Activated CD4-positive, alpha-beta memory T cell treated with anti-CD3 and anti-CD28 coated beads for 36 hours (primary cell): ENCODE measurements at regions of chr16 and their contacts with region 1.

Region 1: DNA sequence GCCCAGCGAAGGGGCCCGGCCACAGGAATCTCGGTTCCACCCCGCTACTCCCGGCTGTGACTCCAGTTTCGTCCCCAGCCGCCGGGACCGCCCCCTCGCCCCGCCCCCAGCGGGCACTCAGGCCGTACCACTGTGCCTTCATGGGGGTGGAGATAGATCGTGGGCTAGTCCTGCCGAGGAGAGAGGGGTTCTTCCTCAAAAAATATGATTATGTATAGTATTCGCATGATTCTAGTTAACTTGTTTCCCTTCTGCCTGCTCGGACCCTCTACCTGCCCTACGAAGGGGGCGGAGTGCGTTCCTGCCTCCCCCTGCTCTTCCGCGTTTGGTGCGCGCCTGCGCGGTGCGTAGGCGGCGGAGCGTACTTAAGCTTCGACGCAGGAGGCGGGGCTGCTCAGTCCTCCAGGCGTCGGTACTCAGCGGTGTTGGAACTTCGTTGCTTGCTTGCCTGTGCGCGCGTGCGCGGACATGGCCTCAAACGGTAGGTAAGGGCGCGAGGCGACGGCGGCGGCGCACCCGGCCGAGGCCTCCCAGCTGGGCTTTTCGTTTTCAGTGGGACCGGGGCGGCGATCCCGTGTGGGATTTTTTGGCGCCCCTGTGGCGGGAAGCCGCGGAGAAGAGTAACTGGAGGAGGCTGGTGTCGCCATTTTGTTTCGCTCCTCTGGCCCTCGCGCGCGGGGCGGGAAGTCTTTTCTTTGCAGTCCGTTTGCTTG is at the start of gene FUS:
- DNase-seq: peak; percentile 93
- H3K4me3 Mint-ChIP-seq: peak within 1 kb of the TSS; percentile 86
- H3K27ac Mint-ChIP-seq: peak within 1 kb of the TSS; percentile 99
- H3K4me1 Mint-ChIP-seq: peaks cover 44% of the 10 kb centered on the region
- H3K27me3 Mint-ChIP-seq: peaks cover 4% of the 10 kb centered on the region
- total RNA-seq, gene FUS: 459 to 489 TPM

Region 2: DNA sequence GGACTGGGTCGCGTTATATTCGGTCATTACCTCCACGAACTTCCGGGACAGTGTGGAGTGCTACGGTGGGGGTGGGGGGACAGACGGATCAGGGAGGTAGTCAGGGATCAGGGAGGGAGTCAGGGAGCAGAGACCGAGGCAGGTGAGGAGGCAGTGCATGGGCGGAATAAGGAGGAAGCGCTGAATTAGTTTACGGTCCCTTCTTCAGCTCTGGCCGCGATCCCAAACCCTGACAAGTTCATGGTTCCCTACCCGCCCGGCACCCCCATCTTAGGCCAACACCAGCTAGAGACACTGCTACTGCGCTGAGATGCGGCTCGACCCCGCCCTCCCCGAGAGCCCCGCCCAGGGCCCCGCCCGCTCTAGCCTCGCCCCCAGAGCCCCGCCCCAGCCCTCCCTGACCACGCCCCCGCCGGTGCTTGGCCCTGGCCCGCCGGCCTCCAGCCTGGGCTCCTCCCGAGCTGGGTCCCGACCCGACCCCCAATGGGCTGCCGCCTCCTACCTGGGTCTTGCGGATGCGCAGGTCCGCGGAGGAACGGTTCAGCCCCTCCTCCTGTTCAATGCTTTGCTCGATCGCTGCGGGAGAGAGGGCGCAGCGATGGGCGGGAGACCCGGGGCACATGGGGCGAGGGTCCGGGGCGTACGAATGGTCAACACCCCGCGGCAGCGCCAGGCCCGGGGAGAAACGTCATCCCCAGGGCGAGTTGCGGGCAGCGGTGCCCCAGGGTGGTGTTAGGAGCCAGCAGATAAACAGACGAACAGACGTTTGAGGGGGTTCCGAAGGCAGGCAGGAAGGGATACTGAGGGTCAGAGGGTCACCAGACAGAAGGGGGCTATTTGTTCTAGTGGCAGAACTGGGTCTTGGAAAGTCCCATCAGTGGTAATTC is 182.7 kb before region 1 on chr16:
- CTCF ChIA-PET with region 1: no interaction called
- POLR2A ChIA-PET with region 1: no interaction called
- intact Hi-C with region 1: loop called (anchors 1 kb)
- DNase-seq: peak; percentile 90
- H3K4me3 Mint-ChIP-seq: peak overlapping the region; percentile 73
- H3K27ac Mint-ChIP-seq: no peak overlapping the region
- H3K4me1 Mint-ChIP-seq: peaks cover 12% of the 10 kb centered on the region
- H3K27me3 Mint-ChIP-seq: peaks cover 1% of the 10 kb centered on the region

Region 3: DNA sequence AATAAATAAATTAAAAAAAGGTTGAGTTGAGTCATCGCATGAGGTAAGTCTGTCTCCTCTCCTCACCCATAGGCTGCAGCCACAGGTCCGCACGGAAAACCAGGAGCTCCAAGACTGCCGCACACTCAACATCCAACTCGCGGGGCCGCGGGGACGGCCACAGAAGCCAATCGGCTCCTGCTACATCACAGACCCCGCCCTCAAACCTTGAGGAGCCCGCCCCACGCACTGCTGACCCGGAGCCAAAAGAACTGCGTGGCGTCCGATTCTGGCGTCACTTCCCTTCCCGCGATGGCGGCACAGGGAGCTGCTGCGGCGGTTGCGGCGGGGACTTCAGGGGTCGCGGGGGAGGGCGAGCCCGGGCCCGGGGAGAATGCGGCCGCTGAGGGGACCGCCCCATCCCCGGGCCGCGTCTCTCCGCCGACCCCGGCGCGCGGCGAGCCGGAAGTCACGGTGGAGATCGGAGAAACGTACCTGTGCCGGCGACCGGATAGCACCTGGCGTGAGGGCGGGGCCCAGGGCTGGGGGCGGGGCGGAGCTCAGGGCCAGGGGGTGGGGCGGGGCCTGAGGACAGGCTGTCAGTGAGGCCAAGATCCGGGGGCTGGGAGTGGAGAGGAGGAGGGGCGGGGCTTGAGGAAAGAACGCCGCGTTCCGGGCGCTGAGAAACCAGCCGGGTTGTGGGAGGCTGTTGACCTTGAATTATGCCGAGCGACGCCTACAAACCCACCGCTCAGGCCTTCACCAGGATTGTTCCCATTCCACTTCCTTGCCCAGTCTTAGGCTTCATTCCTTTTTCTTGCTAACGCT is 62.3 kb before region 1 on chr16 and contains the start of gene KAT8:
- CTCF ChIA-PET with region 1: no interaction called
- POLR2A ChIA-PET with region 1: interaction called, 23 read pairs
- intact Hi-C with region 1: loop called (anchors 1 kb)
- DNase-seq: peak; percentile 99
- H3K4me3 Mint-ChIP-seq: peak within 1 kb of the TSS; percentile 79
- H3K27ac Mint-ChIP-seq: peak within 1 kb of the TSS; percentile 70
- H3K4me1 Mint-ChIP-seq: peaks cover 20% of the 10 kb centered on the region
- H3K27me3 Mint-ChIP-seq: no peaks in the 10 kb centered on the region
- total RNA-seq, gene KAT8: 48.8 to 49.6 TPM

Region 4: GRCh38 chr16:31202414-31203375 is 22.8 kb after region 1 on chr16 and contains the start of gene PYCARD:
- CTCF ChIA-PET with region 1: no interaction called
- POLR2A ChIA-PET with region 1: interaction called, 30 read pairs
- intact Hi-C with region 1: no loop called
- DNase-seq: peak; percentile 49
- H3K4me3 Mint-ChIP-seq: peak within 1 kb of the TSS; percentile 78
- H3K27ac Mint-ChIP-seq: peak within 1 kb of the TSS; percentile 69
- H3K4me1 Mint-ChIP-seq: peaks cover 54% of the 10 kb centered on the region
- H3K27me3 Mint-ChIP-seq: no peaks in the 10 kb centered on the region
- total RNA-seq, gene PYCARD: 13.6 to 14.6 TPM

Region 5: DNA sequence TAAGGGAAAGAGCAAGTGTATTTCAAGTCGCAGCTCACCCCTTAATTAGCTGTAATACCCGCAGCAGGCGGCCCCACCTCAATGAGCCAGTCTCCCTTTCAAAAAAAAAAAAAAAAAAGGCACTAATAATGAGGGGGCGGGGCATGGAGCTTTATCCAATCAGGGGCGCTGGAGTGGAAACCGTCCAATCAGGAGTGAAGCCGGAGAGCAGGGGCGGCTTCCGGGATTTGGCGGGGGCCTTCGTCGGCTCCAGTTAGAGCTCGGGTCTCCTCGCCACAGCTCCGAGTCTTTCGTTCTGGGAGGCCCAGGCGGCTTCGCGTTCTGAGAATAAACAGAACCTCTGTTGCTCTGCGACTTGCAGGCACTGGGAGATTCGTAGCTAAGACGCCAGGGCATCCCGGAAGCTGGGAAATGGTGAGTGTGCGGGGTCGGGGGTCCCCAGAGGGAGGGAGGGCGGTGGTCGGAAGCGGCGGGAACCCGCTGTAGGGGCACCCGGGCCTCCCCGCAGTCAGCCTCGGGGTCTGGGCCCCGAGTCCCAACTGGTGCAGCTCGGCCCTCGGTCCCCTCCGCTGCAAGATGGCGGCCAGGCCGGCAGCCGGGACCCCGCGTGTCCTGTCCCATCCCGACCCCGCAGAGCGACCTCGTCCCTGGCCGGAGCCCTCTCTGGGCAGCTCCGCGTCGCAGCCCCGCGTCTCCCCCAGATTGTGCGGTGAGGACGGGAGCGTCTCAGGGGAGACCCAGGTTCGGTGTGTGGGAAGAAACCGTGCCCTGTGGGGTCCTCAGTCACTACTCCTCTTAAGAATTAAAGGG is 693.9 kb after region 1 on chr16 and contains the start of gene ZNF267:
- CTCF ChIA-PET with region 1: interaction called, 4 read pairs
- POLR2A ChIA-PET with region 1: interaction called, 8 read pairs
- intact Hi-C with region 1: loop called (anchors 5 kb)
- DNase-seq: peak; percentile 96
- H3K4me3 Mint-ChIP-seq: peak within 1 kb of the TSS; percentile 90
- H3K27ac Mint-ChIP-seq: peak within 1 kb of the TSS; percentile 99
- H3K4me1 Mint-ChIP-seq: peaks cover 69% of the 10 kb centered on the region
- H3K27me3 Mint-ChIP-seq: no peaks in the 10 kb centered on the region
- total RNA-seq, gene ZNF267: 72.1 to 76.4 TPM